Dendritic cell treated with granulocyte-macrophage colony-stimulating factor and Interleukin-4, amounts not matched to agents 40 ng/mL and 50 ng/mL, for 4 days (primary cell): ENCODE measurements at regions of chr3 and their contacts with region 1.

Region 1: GRCh38 chr3:131794766-131795388 is 239.9 kb downstream of the CPNE4 start:
- H3K4me3 Mint-ChIP-seq: no peak overlapping the region
- H3K27ac Mint-ChIP-seq: no peak overlapping the region
- H3K4me1 Mint-ChIP-seq: peaks cover 14% of the 10 kb centered on the region
- H3K27me3 Mint-ChIP-seq: no peaks in the 10 kb centered on the region

Region 2: GRCh38 chr3:130596484-130596883 is 1198.4 kb before region 1 on chr3:
- intact Hi-C with region 1: no loop called
- H3K4me3 Mint-ChIP-seq: no peak overlapping the region
- H3K27ac Mint-ChIP-seq: no peak overlapping the region
- H3K4me1 Mint-ChIP-seq: no peaks in the 10 kb centered on the region
- H3K27me3 Mint-ChIP-seq: peaks cover 3% of the 10 kb centered on the region

Region 3: GRCh38 chr3:131231710-131232389 is 563.0 kb before region 1 on chr3:
- intact Hi-C with region 1: loop called (anchors 5 kb)
- H3K4me3 Mint-ChIP-seq: no peak overlapping the region
- H3K27ac Mint-ChIP-seq: no peak overlapping the region
- H3K4me1 Mint-ChIP-seq: no peaks in the 10 kb centered on the region
- H3K27me3 Mint-ChIP-seq: no peaks in the 10 kb centered on the region